GM12878 (cell line): ENCODE measurements at regions of chr12 and their contacts with region 1.

Region 1: DNA sequence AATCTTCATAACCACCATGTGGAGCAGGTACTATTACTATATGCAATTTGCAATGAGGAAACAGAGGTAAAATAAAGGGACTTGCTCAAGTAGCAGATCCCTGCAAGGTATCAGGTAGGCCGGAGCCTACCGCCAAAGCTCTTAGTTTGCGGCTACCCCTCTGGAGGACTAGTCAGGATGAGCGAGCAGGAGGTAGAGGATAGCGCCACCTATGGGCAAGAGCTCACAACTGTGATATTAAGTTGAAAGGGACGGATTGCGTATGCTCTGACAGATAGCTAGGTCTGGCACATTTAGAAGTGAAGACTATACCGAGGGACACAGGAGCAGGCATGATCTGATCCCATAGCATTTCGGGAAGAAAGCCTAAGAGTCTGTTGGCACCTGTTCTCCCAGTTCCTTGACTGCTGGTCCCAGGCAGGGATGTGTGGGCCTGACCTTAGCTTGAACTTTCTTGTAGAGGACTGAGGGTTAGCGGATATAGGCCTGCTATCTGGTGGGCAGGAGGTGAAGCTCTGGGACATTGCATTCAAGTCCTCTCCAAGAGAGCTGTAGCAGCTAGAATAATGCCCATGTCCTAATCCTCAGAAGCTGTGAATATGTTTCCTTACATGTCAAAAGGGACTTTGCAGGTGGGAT is 48.0 kb downstream of the SLC17A8 start:
- DNase-seq: peak; percentile 11
- ATAC-seq: peak; percentile 94
- H3K4me3 ChIP-seq: no peak overlapping the region
- H3K27ac ChIP-seq: no peak overlapping the region
- H3K4me1 ChIP-seq: no peaks in the 10 kb centered on the region
- H3K27me3 ChIP-seq: no peaks in the 10 kb centered on the region; a peak in 1 of 4 replicates
- CTCF ChIP-seq: peak; percentile 65 to 70 (median 69)
- EP300 ChIP-seq: no peak
- POLR2A ChIP-seq: no peak
- RAD21 ChIP-seq: peak; percentile 54

Region 2: DNA sequence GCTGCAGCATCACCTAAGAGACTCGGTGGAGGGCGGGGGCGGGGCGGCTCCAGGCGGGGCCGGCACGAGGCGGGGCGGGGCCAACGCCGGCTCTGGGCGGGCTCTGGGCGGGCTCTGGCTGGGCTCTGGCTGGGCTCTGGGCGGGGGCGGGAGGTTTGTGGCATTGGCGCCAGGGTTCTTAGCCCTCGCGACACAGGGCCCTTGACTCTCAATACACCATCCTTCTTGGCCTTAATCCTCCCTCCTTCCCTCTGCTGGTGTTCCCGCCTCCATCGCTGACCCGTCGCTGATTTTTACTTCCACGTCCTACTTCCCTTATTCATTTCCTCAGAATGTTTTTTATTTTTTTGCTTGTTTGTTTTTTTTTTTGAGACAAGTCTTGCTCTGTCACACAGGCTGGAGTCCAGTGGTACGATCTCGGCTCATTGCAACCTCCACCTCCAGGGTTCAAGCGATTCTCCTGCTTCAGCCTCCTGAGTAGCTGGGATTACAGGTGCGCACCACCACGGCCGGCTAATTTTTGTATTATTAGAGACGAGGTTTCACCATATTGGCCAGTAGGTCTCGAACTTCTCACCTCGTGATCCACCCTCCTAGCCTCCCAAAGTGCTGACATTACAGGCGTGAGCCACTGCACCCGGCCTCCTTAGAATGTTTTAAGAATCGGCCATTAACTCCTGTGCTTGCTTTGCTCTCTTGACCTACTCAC is 261.9 kb before region 1 on chr12 and contains the start of gene BLTP3B:
- CTCF ChIA-PET with region 1: interaction called, 16 read pairs
- POLR2A ChIA-PET with region 1: no interaction called
- RAD21 ChIA-PET with region 1: interaction called, 5 read pairs
- SMC1A ChIA-PET with region 1: no interaction called
- in situ Hi-C with region 1: no loop called
- intact Hi-C with region 1: no loop called
- DNase-seq: peak; percentile 27
- ATAC-seq: peak; percentile 92
- H3K4me3 ChIP-seq: peak within 1 kb of the TSS; percentile 88
- H3K27ac ChIP-seq: peak within 1 kb of the TSS; percentile 94
- H3K4me1 ChIP-seq: peaks cover 8% of the 10 kb centered on the region
- H3K27me3 ChIP-seq: no peaks in the 10 kb centered on the region
- CTCF ChIP-seq: no peak
- EP300 ChIP-seq: no peak
- POLR2A ChIP-seq: peak; percentile 48
- RAD21 ChIP-seq: no peak
- polyA plus RNA-seq, gene BLTP3B: 3.6 to 6.2 TPM

Region 3: GRCh38 chr12:100163416-100164152 is 241.3 kb before region 1 on chr12:
- CTCF ChIA-PET with region 1: interaction called, 10 read pairs
- POLR2A ChIA-PET with region 1: no interaction called
- RAD21 ChIA-PET with region 1: no interaction called
- SMC1A ChIA-PET with region 1: no interaction called
- in situ Hi-C with region 1: no loop called
- intact Hi-C with region 1: no loop called
- DNase-seq: no peak
- ATAC-seq: peak; percentile 100
- H3K4me3 ChIP-seq: no peak overlapping the region
- H3K27ac ChIP-seq: no peak overlapping the region; the same call in 1 of the 2 replicates
- H3K4me1 ChIP-seq: 0 out of 2 replicates have a peak, but pooled peaks cover 3% of the 10 kb centered on the region
- H3K27me3 ChIP-seq: no peaks in the 10 kb centered on the region
- CTCF ChIP-seq: peak; percentile 7 to 14 (median 12); a peak in 2 of 6 replicates
- EP300 ChIP-seq: no peak
- POLR2A ChIP-seq: peak; percentile 55; the same call in 1 of the 2 replicates
- RAD21 ChIP-seq: 0 out of 2 replicates have a peak, but pooled peaks have one; percentile 5

Region 4: GRCh38 chr12:100234598-100235304 is 170.1 kb before region 1 on chr12:
- CTCF ChIA-PET with region 1: interaction called, 104 read pairs
- POLR2A ChIA-PET with region 1: no interaction called
- RAD21 ChIA-PET with region 1: interaction called, 57 read pairs
- SMC1A ChIA-PET with region 1: interaction called, 47 read pairs
- in situ Hi-C with region 1: loop called (anchors 10 kb)
- intact Hi-C with region 1: loop called (anchors 1 kb)
- DNase-seq: peak; percentile 1
- ATAC-seq: peak; percentile 70
- H3K4me3 ChIP-seq: no peak overlapping the region
- H3K27ac ChIP-seq: no peak overlapping the region
- H3K4me1 ChIP-seq: no peaks in the 10 kb centered on the region
- H3K27me3 ChIP-seq: no peaks in the 10 kb centered on the region
- CTCF ChIP-seq: peak; percentile 71 to 84 (median 75)
- EP300 ChIP-seq: no peak
- POLR2A ChIP-seq: no peak
- RAD21 ChIP-seq: peak; percentile 88

Region 5: DNA sequence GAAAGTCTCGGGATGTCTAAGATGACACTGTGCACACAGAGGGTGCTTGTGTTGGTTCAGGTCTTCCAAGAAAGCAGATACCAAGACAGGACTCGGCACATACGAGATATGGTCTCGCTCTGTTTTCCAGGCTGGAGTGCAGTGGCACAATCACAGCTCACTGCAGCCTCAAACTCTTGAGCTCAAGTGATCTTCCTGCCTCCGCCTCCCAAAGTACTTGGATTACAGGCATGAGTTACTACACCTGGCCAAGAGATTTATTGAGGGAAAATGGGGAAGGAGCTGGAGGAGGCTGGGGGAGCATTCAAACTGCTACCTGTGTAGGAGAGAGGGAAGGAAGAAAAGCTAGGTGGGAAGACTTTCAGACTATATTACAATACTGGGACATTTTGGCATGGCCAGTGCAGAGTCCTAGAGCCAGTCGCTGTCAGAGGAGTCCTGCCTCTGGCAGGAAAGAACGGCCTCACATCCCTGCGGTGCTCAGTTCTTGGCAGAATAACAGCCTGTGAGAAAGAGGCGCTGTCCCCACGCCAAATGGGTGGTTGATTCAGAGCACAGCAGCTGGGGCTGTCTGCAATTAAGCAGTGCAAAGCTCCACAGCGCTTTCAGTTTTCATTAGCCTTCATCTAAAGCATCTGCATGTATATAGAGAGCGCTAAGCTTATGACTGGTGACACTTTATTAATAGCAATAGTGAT is 29.7 kb before region 1 on chr12:
- CTCF ChIA-PET with region 1: interaction called, 11 read pairs
- POLR2A ChIA-PET with region 1: no interaction called
- RAD21 ChIA-PET with region 1: no interaction called
- SMC1A ChIA-PET with region 1: interaction called, 3 read pairs
- in situ Hi-C with region 1: no loop called
- intact Hi-C with region 1: no loop called
- DNase-seq: no peak
- ATAC-seq: no peak
- H3K4me3 ChIP-seq: no peak overlapping the region
- H3K27ac ChIP-seq: no peak overlapping the region
- H3K4me1 ChIP-seq: no peaks in the 10 kb centered on the region
- H3K27me3 ChIP-seq: no peaks in the 10 kb centered on the region
- CTCF ChIP-seq: no peak
- EP300 ChIP-seq: no peak
- POLR2A ChIP-seq: no peak
- RAD21 ChIP-seq: no peak

Region 6: GRCh38 chr12:100427078-100427477 is 22.2 kb after region 1 on chr12:
- CTCF ChIA-PET with region 1: interaction called, 16 read pairs
- POLR2A ChIA-PET with region 1: no interaction called
- RAD21 ChIA-PET with region 1: no interaction called
- SMC1A ChIA-PET with region 1: interaction called, 7 read pairs
- in situ Hi-C with region 1: no loop called
- intact Hi-C with region 1: no loop called
- DNase-seq: no peak
- ATAC-seq: no peak
- H3K4me3 ChIP-seq: no peak overlapping the region
- H3K27ac ChIP-seq: no peak overlapping the region
- H3K4me1 ChIP-seq: no peaks in the 10 kb centered on the region
- H3K27me3 ChIP-seq: peaks cover 0 to 2% of the 10 kb centered on the region in 2 experiments; a peak in 2 of 4 replicates
- CTCF ChIP-seq: no peak
- EP300 ChIP-seq: no peak
- POLR2A ChIP-seq: no peak
- RAD21 ChIP-seq: no peak

Region 7: GRCh38 chr12:100668945-100669536 is 264.2 kb after region 1 on chr12:
- CTCF ChIA-PET with region 1: interaction called, 10 read pairs
- POLR2A ChIA-PET with region 1: no interaction called
- RAD21 ChIA-PET with region 1: interaction called, 3 read pairs
- SMC1A ChIA-PET with region 1: interaction called, 7 read pairs
- in situ Hi-C with region 1: no loop called
- intact Hi-C with region 1: no loop called
- DNase-seq: no peak
- ATAC-seq: peak; percentile 94
- H3K4me3 ChIP-seq: no peak overlapping the region
- H3K27ac ChIP-seq: no peak overlapping the region
- H3K4me1 ChIP-seq: no peaks in the 10 kb centered on the region
- H3K27me3 ChIP-seq: no peaks in the 10 kb centered on the region; a peak in 2 of 4 replicates
- CTCF ChIP-seq: peak; percentile 80 to 93 (median 89)
- EP300 ChIP-seq: no peak
- POLR2A ChIP-seq: no peak
- RAD21 ChIP-seq: peak; percentile 66